Heart left ventricle (tissue), 16 donors: ENCODE measurements at regions of chr7 and their contacts with region 1.

Region 1: DNA sequence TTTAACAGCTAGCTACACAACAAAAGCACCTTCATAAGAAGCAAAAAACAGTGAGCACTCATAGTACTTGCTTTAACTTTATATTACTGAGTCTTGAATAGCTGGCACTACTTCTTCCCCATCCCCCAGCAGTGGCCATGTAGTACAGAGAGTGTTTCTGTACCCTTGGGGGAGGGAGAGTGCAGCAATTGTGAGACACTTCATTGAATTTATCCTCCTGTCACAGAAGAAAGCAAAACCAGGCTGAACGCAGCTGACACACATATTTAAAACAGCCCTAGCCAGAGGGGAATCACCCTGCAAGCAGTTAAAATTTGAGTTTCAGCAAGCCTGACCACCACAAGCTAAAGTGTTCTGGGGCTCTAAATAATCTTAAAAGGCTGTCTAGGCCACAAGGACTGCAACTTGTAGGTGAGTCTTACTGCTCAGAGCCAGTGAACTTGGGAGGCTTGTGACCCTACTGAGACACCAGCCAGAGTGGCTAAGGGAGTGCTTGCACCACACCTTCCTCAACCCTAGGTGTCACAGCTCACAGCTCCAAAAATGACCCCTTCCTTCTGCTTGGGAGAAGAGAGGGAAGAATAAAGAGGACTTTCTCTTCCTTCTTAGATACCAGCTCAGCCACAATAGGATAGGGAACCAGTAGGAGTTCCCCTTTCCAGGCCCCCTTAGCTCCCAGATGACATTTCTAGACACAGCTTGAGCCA is 97.7 kb upstream of the MEOX2 start:
- DNase-seq: no peak
- ATAC-seq: peak in 3 of 4 donors; percentile 24 to 43 (median 26)
- H3K4me3 ChIP-seq: no peak overlapping the region
- H3K27ac ChIP-seq: peak overlapping the region in 6 of 12 donors; percentile 9 to 34 (median 25)
- H3K4me1 ChIP-seq: peaks cover 0 to 9% (median 6%) of the 10 kb centered on the region in 12 donors
- H3K27me3 ChIP-seq: no peaks in the 10 kb centered on the region
- CTCF ChIP-seq: no peak
- POLR2A ChIP-seq: no peak

Region 2: GRCh38 chr7:15729746-15730145 is 54.4 kb before region 1 on chr7:
- intact Hi-C with region 1: loop called in 1 of 10 experiments (anchors 2 kb)
- DNase-seq: no peak
- ATAC-seq: no peak
- H3K4me3 ChIP-seq: no peak overlapping the region
- H3K27ac ChIP-seq: peak overlapping the region in 4 of 12 donors; percentile 20 to 48 (median 32)
- H3K4me1 ChIP-seq: peaks cover 0 to 8% (median 0%) of the 10 kb centered on the region in 12 donors
- H3K27me3 ChIP-seq: no peaks in the 10 kb centered on the region
- CTCF ChIP-seq: no peak
- POLR2A ChIP-seq: no peak

Region 3: GRCh38 chr7:15816835-15817426 is 32.8 kb after region 1 on chr7:
- intact Hi-C with region 1: no loop called
- DNase-seq: no peak
- ATAC-seq: no peak
- H3K4me3 ChIP-seq: no peak overlapping the region
- H3K27ac ChIP-seq: peak overlapping the region in 2 of 12 donors; percentile 16 to 26
- H3K4me1 ChIP-seq: peaks cover 0 to 10% (median 1%) of the 10 kb centered on the region in 12 donors
- H3K27me3 ChIP-seq: no peaks in the 10 kb centered on the region
- CTCF ChIP-seq: no peak
- POLR2A ChIP-seq: no peak

Region 4: GRCh38 chr7:15853832-15854470 is 69.8 kb after region 1 on chr7:
- intact Hi-C with region 1: no loop called
- DNase-seq: no peak
- ATAC-seq: peak; percentile 36 to 81 (median 49)
- H3K4me3 ChIP-seq: no peak overlapping the region
- H3K27ac ChIP-seq: peak overlapping the region in 5 of 12 donors; percentile 8 to 53 (median 15)
- H3K4me1 ChIP-seq: peaks cover 0 to 32% (median 11%) of the 10 kb centered on the region in 12 donors
- H3K27me3 ChIP-seq: no peaks in the 10 kb centered on the region
- CTCF ChIP-seq: no peak
- POLR2A ChIP-seq: no peak